ENCODE measurements at regions of chr11 and their contacts with region 1.

Region 1: GRCh38 chr11:122137081-122137793 is 21.2 kb upstream of the BLID start:
- DNase-seq: no peak
- ATAC-seq: peak; percentile 61
- H3K4me3 ChIP-seq: no peak overlapping the region
- H3K27ac ChIP-seq: no peak overlapping the region
- H3K4me1 ChIP-seq: peaks cover 3 to 5% of the 10 kb centered on the region in 2 donors
- H3K27me3 ChIP-seq: no peaks in the 10 kb centered on the region

Region 2: DNA sequence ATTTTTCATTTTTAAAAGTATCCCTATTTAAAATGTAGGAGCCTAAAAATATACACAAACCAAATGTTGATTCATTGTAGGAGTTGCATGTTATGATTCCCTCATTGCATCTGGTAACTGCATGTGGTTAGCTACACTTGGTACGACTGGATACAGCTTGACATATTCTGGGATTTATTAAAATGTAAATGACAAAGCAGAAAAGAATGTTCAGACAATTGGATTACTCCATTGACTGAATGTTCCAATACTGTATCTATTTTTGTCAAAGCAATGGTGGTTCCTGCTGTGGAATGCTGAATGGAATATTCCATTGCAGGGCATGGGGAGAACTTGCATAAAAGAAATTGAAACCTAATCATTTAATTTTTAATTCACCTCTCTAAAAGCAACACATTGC is 52.0 kb before region 1 on chr11:
- intact Hi-C with region 1: no loop called
- DNase-seq: no peak
- ATAC-seq: peak; percentile 73
- H3K4me3 ChIP-seq: no peak overlapping the region
- H3K27ac ChIP-seq: no peak overlapping the region
- H3K4me1 ChIP-seq: peaks cover 0 to 9% of the 10 kb centered on the region in 2 donors
- H3K27me3 ChIP-seq: no peaks in the 10 kb centered on the region

Region 3: DNA sequence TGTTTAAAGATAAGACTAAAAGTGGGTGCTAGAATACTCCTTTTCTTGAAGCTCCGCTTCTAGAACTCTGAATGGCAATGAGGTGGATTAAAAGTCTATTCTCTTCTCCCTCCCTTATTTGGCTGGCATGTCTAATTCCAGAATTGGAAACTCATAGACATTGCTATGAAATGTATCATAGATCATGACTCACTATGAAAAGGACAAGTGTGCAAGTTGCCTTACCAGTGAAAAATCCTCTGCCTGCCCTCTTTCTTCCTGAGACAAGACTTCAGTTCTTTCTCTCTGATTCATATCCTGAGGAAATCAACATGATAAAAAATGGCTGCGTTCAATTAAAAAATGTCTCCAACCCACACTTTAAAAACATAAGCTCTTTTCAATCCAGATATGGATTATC is 52.0 kb after region 1 on chr11:
- intact Hi-C with region 1: loop called in 1 of 2 experiments (anchors 5 kb)
- DNase-seq: no peak
- ATAC-seq: peak; percentile 88
- H3K4me3 ChIP-seq: no peak overlapping the region
- H3K27ac ChIP-seq: peak overlapping the region in 1 of 2 donors; percentile 90
- H3K4me1 ChIP-seq: peaks cover 3% of the 10 kb centered on the region in 2 donors
- H3K27me3 ChIP-seq: no peaks in the 10 kb centered on the region

Region 4: DNA sequence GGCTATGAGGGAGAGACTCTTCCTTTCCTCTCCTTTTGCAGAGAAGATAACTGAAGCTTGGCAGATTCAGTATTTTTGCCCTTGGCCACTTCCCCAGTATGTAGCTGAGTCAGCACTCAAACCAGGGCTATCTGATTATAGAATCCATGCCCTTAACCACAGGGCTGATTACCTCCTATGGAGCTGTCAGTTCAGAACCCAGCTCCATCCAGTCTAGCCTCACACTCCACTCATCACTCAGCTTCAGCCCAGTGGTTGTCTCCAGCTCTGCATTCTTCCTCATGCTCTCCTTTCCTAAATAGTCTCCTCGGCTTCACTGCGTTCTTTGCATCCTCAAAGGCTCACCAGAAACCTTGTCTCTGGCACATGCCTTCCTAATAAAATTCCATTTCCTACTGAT is 130.4 kb after region 1 on chr11:
- intact Hi-C with region 1: no loop called
- DNase-seq: no peak
- ATAC-seq: no peak
- H3K4me3 ChIP-seq: no peak overlapping the region
- H3K27ac ChIP-seq: no peak overlapping the region
- H3K4me1 ChIP-seq: peaks cover 0 to 4% of the 10 kb centered on the region in 2 donors
- H3K27me3 ChIP-seq: no peaks in the 10 kb centered on the region

Measured in aorta (tissue), 5 donors.